ENCODE measurements at regions of chr2 and their contacts with region 1.

Region 1: DNA sequence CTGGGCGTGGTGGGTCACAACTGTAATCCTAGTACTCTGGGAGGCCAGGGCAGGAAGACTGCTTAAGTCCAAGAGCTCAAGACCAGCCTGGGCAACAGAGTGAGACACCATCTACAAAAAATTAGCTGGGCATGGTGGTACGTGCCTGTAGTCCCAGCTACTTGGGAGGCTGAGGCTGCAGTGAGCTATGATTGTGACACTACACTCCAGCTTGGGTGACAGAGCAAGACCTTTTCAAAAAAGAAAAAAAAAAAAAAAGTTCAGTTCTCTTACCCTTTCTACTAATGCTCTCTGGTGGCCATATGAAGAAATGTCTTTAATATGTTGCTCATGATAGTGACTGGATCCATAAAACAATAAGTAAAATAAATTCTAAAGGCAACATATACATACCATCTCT is 14.9 kb downstream of the TYW5 start:
- DNase-seq: peak; percentile 40
- ATAC-seq: peak; percentile 83
- H3K4me3 ChIP-seq: no peak overlapping the region
- H3K27ac ChIP-seq: no peak overlapping the region
- H3K4me1 ChIP-seq: peaks cover 25% of the 10 kb centered on the region
- H3K27me3 ChIP-seq: no peaks in the 10 kb centered on the region
- CTCF ChIP-seq: peak; percentile 44
- EP300 ChIP-seq: no peak
- POLR2A ChIP-seq: no peak
- RAD21 ChIP-seq: no peak

Region 2: GRCh38 chr2:199850718-199851500 is 89.5 kb before region 1 on chr2 and contains the start of gene FTCDNL1:
- CTCF ChIA-PET with region 1: interaction called, 3 read pairs
- POLR2A ChIA-PET with region 1: no interaction called
- in situ Hi-C with region 1: no loop called
- intact Hi-C with region 1: loop called (anchors 2 kb)
- DNase-seq: peak; percentile 58
- ATAC-seq: peak; percentile 90
- H3K4me3 ChIP-seq: peak within 1 kb of the TSS; percentile 68 to 84 (median 75)
- H3K27ac ChIP-seq: peak within 1 kb of the TSS; percentile 68
- H3K4me1 ChIP-seq: peaks cover 15% of the 10 kb centered on the region
- H3K27me3 ChIP-seq: peaks cover 0 to 8% of the 10 kb centered on the region in 2 experiments; a peak in 1 of 5 replicates
- CTCF ChIP-seq: peak; percentile 80
- EP300 ChIP-seq: peak in 1 of 2 experiments; percentile 10; a peak in 1 of 4 replicates
- POLR2A ChIP-seq: peak; percentile 80 to 87
- RAD21 ChIP-seq: peak; percentile 62; the same call in 1 of the 2 replicates
- total RNA-seq, gene FTCDNL1: 1.1 and 1.4 TPM in 2 replicates

Region 3: DNA sequence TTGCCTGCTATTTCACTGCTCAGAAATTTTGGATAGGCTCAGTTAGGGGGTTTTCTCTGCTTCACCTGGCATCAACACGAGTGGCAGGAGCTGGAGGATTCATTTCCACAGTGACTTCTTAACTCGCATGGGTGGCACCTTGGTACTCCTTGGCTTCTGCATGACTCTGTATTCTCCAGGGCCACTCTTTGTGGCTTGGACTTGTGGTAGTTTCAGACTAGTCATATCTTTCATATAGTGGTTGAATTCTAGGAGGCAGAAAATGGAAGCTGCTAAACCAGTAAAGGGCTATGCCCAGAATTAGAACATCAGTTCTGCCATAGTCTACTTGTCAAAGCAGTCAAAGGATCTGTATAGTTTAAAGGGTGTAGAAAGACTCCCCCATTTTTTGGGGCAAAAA is 21.8 kb after region 1 on chr2:
- CTCF ChIA-PET with region 1: no interaction called
- POLR2A ChIA-PET with region 1: no interaction called
- in situ Hi-C with region 1: no loop called
- intact Hi-C with region 1: no loop called
- DNase-seq: no peak
- ATAC-seq: no peak
- H3K4me3 ChIP-seq: no peak overlapping the region
- H3K27ac ChIP-seq: no peak overlapping the region
- H3K4me1 ChIP-seq: peaks cover 18% of the 10 kb centered on the region
- H3K27me3 ChIP-seq: no peaks in the 10 kb centered on the region
- CTCF ChIP-seq: no peak
- EP300 ChIP-seq: no peak
- POLR2A ChIP-seq: no peak
- RAD21 ChIP-seq: no peak

Region 4: GRCh38 chr2:200156166-200156835 is 215.9 kb after region 1 on chr2:
- CTCF ChIA-PET with region 1: no interaction called
- POLR2A ChIA-PET with region 1: no interaction called
- in situ Hi-C with region 1: no loop called
- intact Hi-C with region 1: no loop called
- DNase-seq: peak; percentile 24
- ATAC-seq: no peak; the same call in 2 of the 3 replicates
- H3K4me3 ChIP-seq: peak overlapping the region in 2 of 3 experiments; percentile 3 to 22; a peak in 3 of 6 replicates
- H3K27ac ChIP-seq: no peak overlapping the region
- H3K4me1 ChIP-seq: peaks cover 25% of the 10 kb centered on the region; the same call in 1 of the 2 replicates
- H3K27me3 ChIP-seq: peaks cover 0 to 12% of the 10 kb centered on the region in 2 experiments; a peak in 3 of 5 replicates
- CTCF ChIP-seq: no peak
- EP300 ChIP-seq: no peak
- POLR2A ChIP-seq: no peak
- RAD21 ChIP-seq: no peak

Measured in HepG2 (cell line).